Right cardiac atrium (tissue), 5 donors: ENCODE measurements at regions of chr7 and their contacts with region 1.

Region 1: DNA sequence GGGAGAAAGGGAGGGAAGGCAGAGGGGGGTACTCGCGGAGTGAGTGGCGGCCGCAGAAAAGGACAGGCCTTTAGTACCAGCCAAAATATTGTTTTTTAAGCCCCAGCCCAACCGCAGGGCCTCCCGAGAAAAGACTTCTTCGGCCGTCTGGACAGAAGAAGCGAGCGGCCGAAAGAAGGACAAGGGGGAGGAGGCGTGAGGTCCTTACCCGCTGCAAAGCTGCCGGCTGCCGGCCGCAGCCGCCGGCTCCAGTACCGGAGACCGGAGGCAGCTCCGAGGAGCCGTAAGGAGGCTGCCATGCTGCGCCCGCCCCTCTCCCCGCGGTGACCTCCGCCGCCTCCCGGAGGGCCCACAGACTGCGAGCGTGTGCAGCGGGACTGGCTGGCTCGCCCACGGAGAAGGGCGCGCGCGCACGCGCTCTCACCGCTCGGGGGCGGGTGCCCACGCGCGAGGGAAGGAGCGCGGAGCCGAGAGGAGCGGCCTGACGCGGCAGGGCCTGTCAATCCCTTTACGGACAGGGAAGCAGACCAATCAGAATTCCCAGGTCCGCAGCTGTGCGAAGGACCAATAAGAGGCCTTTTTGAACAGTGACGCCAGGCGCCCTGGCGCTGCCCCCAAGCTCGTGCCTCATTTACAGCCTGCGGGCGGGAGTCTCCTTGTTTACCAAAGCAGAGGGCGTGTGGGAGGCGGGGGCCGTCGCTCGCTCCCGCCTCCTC is at the start of gene HIBADH:
- DNase-seq: peak; percentile 99 to 100 (median 100)
- ATAC-seq: peak; percentile 100
- H3K4me3 ChIP-seq: peak within 1 kb of the TSS; percentile 87
- H3K27ac ChIP-seq: peak within 1 kb of the TSS; percentile 86
- H3K4me1 ChIP-seq: no peaks in the 10 kb centered on the region
- H3K27me3 ChIP-seq: no peaks in the 10 kb centered on the region
- total RNA-seq, gene HIBADH: 57.7 to 74.2 (median 69.5) TPM

Region 2: DNA sequence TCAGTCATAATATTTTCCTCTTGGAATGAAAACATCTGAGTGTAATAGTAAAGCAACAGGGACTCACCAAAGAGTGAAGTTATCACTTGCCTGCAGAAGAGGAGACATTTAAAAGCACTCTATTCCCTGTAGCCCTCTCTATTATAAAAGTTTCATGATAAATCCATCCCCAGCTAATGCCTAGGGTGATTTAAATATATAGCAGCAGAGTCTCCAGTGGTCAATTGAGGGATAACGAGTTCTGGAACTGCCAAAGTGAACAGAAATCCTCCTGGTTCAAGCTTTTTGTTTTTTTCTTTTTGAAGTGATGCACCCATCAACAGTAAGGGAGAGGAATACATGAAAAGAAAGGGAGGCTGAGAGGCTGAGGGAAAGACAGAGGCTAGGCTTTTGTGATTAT is 332.7 kb before region 1 on chr7:
- intact Hi-C with region 1: no loop called
- DNase-seq: no peak
- ATAC-seq: no peak
- H3K4me3 ChIP-seq: no peak overlapping the region
- H3K27ac ChIP-seq: no peak overlapping the region
- H3K4me1 ChIP-seq: no peaks in the 10 kb centered on the region
- H3K27me3 ChIP-seq: no peaks in the 10 kb centered on the region

Region 3: GRCh38 chr7:27697861-27698430 is 35.3 kb after region 1 on chr7:
- intact Hi-C with region 1: no loop called
- DNase-seq: peak in 2 of 3 donors; percentile 43 to 49
- ATAC-seq: peak; percentile 51 to 54
- H3K4me3 ChIP-seq: no peak overlapping the region
- H3K27ac ChIP-seq: no peak overlapping the region
- H3K4me1 ChIP-seq: peaks cover 2% of the 10 kb centered on the region
- H3K27me3 ChIP-seq: no peaks in the 10 kb centered on the region

Region 4: DNA sequence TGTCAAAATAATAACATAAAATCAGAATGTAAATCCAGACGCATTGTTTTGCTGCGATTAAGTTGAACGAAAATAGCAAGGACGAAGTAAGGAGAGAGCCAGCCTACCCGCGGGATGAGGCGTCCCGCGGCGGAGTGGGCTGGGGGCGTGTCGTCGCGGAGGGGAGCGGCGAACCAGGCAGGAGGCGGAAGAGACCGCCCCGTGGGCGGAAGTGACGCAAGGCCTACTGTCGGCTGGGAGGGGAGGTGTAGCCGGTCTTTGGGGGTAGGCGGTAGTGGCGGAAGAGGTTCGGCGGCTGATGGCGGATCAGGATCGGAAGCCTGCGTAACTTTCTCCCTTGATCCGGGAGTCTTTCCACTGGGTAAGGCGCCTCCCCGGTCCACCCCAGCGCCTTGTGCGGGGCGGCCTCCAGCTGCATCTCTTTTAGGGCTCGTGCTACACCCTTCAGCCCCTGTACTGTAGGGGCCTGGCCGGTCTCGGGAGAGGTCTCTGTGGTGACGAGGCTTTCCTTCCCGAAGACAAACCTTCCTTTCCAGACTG is 77.3 kb after region 1 on chr7 and contains the start of gene TAX1BP1:
- intact Hi-C with region 1: loop called in 1 of 4 experiments (anchors 5 kb)
- DNase-seq: peak; percentile 95 to 98 (median 98)
- ATAC-seq: peak; percentile 100
- H3K4me3 ChIP-seq: peak within 1 kb of the TSS; percentile 87
- H3K27ac ChIP-seq: peak within 1 kb of the TSS; percentile 98
- H3K4me1 ChIP-seq: peaks cover 2% of the 10 kb centered on the region
- H3K27me3 ChIP-seq: no peaks in the 10 kb centered on the region
- total RNA-seq, gene TAX1BP1: 120 to 140 (median 137) TPM